Left ventricle myocardium superior (tissue), 1 donor: ENCODE measurements at regions of chr10 and their contacts with region 1.

Region 1: GRCh38 chr10:63083904-63084689 is 49.0 kb upstream of the NRBF2 start:
- DNase-seq: peak; percentile 45
- ATAC-seq: peak; percentile 92

Region 2: DNA sequence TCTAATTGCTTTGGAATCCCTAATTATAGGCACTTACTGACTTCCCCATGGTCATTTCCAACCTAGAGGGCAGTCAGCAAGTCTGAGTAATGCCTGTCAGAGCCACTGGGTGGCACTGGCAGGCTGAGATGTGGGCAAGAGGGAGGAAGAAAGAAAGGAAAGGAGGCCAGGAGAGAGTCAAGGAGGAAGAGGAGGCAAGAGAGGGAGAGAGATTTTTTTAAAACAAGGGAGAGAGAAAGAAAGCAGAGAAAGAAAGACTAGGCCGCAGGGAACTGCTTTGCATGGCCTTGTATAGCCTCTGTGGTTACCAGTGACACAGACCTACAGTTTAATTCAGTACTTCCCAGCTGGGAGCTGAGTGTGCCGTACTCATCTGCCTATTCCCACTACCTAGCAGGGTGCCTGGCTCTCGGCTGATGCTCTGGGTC is 490.0 kb before region 1 on chr10:
- intact Hi-C with region 1: loop called (anchors 5 kb)
- DNase-seq: peak; percentile 76
- ATAC-seq: peak; percentile 88

Region 3: GRCh38 chr10:63157845-63158624 is 73.9 kb after region 1 on chr10:
- intact Hi-C with region 1: loop called (anchors 10 kb)
- DNase-seq: no peak
- ATAC-seq: peak; percentile 75

Region 4: DNA sequence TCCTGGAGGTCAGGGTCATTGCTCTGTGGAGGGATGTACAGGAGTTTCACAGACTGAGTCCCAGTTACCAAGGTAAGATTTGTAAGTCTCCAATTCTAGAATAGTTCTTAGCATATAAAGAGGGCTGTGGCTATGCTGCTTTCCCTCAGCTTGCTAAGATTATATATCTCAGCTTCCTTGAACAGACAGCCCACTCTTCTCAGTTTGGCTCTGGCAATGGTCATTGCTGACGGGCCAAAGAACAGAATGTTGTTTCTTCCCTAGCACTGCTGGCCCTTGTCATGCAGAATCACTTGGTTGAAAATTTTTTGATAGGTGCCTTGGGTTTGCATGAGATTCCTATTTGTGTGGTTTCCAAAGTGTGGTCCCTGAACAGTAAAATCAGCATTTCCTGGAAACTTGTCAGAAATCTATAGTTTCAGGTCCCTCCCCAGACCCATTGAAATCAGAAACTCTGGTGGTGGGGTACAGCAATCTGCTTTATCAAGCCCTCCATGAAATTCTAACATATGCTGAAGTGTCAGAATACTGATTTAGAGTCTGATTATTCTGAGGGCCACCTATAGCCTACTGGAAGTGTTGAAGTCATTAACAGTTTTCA is 87.3 kb after region 1 on chr10:
- intact Hi-C with region 1: no loop called
- DNase-seq: no peak
- ATAC-seq: peak; percentile 58